ENCODE measurements at regions of chr2 and their contacts with region 1.

Region 1: DNA sequence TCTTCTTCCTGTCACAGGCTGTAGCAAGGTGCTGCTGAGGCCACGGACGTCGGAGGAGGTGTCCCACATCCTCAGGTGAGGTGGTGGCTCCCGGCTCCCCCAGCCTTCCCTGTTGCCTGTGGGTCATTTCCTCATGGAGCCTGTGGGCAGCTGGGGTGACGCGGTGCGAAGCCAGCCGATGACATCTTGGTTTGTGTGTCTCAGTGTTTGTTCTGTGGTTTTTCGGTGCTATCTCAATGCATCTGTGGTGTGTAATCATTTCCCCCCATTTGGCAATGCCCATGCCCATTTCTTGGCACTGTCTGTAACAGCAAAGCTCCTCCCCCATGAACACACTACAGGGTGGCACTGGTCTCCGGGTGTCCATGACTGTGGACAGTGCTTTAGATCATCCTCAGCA is 6.6 kb downstream of the D2HGDH start:
- DNase-seq: peak; percentile 62
- ATAC-seq: peak; percentile 51
- H3K4me3 Mint-ChIP-seq: peak overlapping the region; percentile 35
- H3K27ac Mint-ChIP-seq: no peak overlapping the region
- H3K4me1 Mint-ChIP-seq: peaks cover 32% of the 10 kb centered on the region
- H3K27me3 Mint-ChIP-seq: no peaks in the 10 kb centered on the region

Region 2: GRCh38 chr2:241762933-241763369 is 21.9 kb after region 1 on chr2:
- CTCF ChIA-PET with region 1: interaction called, 14 read pairs
- DNase-seq: peak; percentile 95
- ATAC-seq: peak; percentile 83
- H3K4me3 Mint-ChIP-seq: peak overlapping the region; percentile 62
- H3K27ac Mint-ChIP-seq: peak overlapping the region; percentile 84
- H3K4me1 Mint-ChIP-seq: peaks cover 35% of the 10 kb centered on the region
- H3K27me3 Mint-ChIP-seq: peaks cover 3% of the 10 kb centered on the region